Left cardiac atrium (tissue), 4 donors: ENCODE measurements at regions of chr11 and their contacts with region 1.

Region 1: DNA sequence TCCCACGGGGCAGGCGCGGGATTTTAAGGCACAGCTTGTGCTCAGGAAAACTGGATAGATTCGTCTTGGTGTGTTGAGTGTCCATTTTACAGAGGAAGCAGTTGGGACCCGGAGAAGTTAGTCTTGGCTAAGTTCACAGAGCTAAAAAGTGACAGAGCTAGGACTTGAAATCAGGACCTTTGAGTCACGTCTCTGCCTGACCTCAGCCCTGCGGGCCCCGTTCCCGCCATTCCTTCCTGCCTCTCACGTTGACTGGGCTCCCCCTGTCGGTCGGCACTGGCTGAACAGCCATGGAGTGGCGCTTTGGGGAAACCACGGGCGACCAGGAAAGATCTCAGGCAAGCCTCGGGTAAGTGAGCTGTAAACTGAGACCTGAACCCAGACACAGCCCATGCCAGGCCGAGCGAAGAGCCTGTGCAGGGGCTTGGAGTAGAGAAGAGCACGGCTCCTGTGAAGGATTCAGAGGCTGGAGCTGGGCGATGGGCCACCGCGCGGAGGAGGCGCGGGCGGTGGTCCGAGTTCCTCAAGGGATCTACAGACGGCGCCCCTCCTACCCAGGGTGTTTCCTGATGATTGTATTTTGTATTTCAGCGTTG is 54.1 kb downstream of the WNT11 start:
- DNase-seq: peak; percentile 92
- ATAC-seq: peak; percentile 89 to 92

Region 2: DNA sequence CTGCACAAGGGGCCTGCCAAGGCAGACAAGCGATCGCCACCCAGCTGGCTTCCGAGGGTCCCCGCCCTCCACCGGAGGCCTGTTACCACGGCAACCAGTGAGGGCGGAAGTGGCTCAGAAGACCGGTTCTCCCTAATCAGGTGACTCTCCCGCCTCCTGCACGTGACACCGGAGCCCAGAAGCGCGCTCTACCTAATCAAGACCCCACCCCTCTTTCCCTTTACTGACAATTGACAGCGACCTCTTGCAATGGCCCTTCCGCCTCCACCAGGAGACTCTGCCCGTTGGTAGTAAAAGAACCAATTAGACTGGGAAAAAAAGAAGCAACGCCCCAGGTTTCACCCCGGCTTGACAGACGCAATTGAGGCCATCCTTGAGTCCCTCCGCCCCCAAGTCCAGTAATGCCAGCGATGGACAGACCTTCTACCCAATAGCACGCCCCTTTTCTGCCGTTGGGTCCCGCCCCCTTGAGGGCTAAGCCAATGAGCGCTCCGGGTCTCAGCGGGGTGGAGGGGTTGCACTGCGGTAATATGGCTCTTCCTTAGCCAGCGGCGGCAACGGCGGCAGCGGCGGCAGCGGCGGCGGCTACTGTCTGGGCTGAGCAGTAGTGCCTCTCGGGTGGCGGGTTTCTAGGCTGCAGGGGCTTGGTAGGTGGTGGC is 337.4 kb before region 1 on chr11 and contains the start of gene UVRAG:
- intact Hi-C with region 1: loop called in 1 of 2 experiments (anchors 10 kb)
- DNase-seq: peak; percentile 98
- ATAC-seq: peak; percentile 93 to 98
- total RNA-seq, gene UVRAG: 13.9 to 17.7 TPM

Region 3: DNA sequence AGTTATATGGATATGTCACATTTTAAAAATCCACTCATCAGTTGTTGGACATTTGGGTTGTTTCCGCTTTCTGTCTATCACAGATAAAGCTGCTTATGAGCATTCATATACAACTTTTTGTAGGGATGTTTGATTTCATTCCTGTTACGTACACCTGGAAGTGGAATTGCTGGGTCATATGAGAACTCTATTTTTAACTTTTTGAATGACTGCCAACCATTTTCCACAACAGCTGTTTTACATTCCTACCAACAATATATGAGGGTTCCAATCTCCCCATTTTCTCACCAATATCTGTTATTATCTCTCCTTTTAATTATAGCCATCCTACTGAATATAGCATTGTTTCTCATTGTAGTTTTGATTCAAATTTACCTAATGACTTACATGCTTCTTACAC is 165.2 kb before region 1 on chr11:
- intact Hi-C with region 1: no loop called
- DNase-seq: no peak
- ATAC-seq: no peak

Region 4: GRCh38 chr11:76083563-76084451 is 68.4 kb before region 1 on chr11:
- intact Hi-C with region 1: no loop called
- DNase-seq: no peak
- ATAC-seq: no peak

Region 5: GRCh38 chr11:76225122-76225611 is 73.0 kb after region 1 on chr11:
- intact Hi-C with region 1: no loop called
- DNase-seq: peak; percentile 52
- ATAC-seq: peak; percentile 71 to 81